Right cardiac atrium (tissue), 5 donors: ENCODE measurements at regions of chr2 and their contacts with region 1.

Region 1: DNA sequence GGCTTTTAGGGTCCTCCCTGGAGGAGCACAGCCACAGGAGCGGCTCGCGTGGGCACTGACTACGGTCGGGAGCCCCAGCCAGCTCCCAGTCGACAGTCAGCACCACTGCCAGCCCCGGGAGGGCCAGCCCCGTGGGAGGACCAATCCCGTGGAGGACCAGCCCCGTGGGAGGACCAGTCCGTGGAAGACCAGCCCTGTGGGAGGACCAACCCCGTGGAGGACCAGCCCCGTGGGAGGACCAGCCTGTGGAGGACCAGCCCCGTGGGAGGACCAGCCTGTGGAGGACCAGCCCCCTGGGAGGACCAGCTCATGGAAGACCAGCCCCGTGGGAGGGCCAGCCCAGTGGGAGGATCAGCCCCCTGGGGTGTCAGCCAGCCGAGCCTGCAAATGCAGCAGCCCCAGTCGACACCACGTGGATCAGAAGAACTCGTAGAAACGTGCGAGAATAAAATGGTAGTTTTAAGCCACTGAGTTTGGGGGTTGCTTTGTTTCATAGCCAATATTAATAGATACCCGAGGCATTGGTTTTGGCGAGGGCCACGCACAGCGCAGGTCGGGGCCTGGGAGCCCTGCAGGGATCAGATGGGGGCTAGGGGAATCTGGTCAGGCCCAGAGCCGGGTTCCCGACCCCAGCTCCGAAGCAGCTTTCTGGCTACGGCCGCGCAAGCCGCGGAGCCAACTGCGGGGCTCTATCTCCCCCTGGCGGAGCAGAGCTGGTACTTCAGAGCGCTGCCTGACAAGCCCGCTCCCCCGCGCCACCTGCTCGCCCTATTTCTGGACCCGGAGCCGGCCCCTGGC is 73.0 kb downstream of the TEX51 start:
- DNase-seq: peak; percentile 77 to 89 (median 86)
- ATAC-seq: peak; percentile 89 to 95
- H3K4me3 ChIP-seq: peak overlapping the region; percentile 33
- H3K27ac ChIP-seq: no peak overlapping the region
- H3K4me1 ChIP-seq: no peaks in the 10 kb centered on the region
- H3K27me3 ChIP-seq: no peaks in the 10 kb centered on the region

Region 2: GRCh38 chr2:125745514-125745913 is 1226.2 kb before region 1 on chr2:
- intact Hi-C with region 1: loop called in 2 of 4 experiments (anchors 10 kb)
- DNase-seq: no peak
- ATAC-seq: peak; percentile 51 to 60
- H3K4me3 ChIP-seq: no peak overlapping the region
- H3K27ac ChIP-seq: no peak overlapping the region
- H3K4me1 ChIP-seq: no peaks in the 10 kb centered on the region
- H3K27me3 ChIP-seq: no peaks in the 10 kb centered on the region